AG04449 (cell line): ENCODE measurements at regions of chr20 and their contacts with region 1.

Region 1: GRCh38 chr20:62921119-62921687 is 5.1 kb downstream of the DIDO1 start:
- DNase-seq: no peak
- H3K4me3 ChIP-seq: no peak overlapping the region
- CTCF ChIP-seq: peak; percentile 70

Region 2: DNA sequence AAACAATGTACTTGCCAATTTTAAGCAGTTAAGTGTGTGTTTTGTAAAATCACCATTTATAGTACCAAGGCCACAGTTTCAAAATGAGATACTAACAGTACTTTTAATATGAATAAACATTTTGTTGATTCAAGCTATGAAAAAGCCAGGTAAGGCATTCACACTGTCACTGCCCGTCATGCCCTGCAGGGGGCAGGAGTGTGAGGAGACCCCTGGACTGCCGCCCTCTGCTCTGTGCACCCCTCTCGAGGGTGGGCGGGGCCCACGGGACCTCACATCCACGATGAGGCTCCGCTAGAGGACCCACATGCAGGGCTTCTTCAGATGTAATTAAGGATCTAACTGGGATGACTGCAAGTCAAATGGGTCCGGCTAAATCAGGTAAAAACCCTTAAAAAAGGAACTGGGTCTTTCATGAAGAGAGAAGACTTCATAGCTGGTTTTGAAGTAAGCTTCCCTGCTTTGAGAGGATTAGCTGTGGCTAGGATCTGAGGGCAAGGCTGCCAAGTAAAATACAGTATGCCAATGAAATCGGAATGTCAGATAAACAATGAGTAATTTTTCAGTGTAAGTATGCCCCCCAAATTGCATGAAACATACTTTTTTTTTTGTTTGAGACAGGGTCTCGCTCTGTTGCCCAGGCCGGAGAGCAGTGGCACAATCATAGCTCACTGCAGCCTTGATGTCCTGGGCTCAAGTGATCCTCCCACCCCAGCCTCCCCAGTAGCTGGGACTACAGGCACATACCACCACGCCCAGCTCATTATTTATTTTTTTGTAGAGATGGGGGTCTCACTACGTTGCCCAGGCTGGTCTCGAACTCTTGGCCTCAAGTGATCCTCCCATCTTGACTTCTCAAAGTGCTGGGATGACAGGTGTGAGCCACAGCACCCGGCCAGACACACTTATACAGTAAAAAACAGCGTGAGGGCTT is 13.6 kb before region 1 on chr20:
- CTCF ChIA-PET with region 1: interaction called, 189 read pairs
- POLR2A ChIA-PET with region 1: interaction called, 3 read pairs
- DNase-seq: no peak
- H3K4me3 ChIP-seq: no peak overlapping the region
- CTCF ChIP-seq: peak; percentile 38

Region 3: DNA sequence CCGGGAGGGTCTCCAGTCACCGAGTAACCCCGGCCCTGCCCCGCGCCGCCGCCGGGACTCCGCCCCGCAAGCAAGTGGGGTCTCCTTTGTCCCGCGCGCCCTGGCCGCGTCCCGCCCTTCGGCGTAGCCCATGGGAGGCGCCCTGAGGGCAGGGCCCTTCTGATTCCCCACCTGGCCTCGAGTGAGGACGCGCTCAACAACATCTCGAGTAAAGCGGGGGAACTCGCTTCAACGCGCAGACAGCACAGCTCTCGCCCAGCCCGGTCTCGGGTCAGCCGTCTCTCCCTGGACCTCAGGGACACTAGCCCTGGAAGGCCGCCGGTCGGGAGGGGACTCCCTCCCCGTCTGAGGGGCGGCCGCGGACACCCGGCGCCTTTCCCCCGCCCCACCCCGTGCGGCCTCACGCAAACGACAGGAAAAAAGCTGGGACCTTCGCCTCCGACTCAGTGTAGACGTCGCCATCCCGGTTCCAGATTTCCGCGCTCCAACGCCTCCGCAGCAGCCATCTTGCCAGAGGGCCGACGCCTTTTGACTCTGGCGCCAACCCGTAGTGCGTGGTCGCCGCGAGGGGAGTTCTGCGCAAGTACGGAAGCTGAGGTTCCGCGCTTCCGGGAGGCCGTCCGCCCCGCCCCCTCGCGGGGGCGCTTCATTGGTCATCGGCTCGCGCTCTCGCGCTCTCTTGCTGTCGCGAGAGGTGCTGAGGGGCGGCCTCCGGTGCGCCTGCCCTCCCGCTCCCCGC is 16.3 kb after region 1 on chr20:
- CTCF ChIA-PET with region 1: interaction called, 68 read pairs
- POLR2A ChIA-PET with region 1: interaction called, 4 read pairs
- DNase-seq: peak; percentile 83
- H3K4me3 ChIP-seq: peak overlapping the region; percentile 94
- CTCF ChIP-seq: no peak